Motor neuron (in vitro differentiated cells): ENCODE measurements at regions of chr11 and their contacts with region 1.

Region 1: DNA sequence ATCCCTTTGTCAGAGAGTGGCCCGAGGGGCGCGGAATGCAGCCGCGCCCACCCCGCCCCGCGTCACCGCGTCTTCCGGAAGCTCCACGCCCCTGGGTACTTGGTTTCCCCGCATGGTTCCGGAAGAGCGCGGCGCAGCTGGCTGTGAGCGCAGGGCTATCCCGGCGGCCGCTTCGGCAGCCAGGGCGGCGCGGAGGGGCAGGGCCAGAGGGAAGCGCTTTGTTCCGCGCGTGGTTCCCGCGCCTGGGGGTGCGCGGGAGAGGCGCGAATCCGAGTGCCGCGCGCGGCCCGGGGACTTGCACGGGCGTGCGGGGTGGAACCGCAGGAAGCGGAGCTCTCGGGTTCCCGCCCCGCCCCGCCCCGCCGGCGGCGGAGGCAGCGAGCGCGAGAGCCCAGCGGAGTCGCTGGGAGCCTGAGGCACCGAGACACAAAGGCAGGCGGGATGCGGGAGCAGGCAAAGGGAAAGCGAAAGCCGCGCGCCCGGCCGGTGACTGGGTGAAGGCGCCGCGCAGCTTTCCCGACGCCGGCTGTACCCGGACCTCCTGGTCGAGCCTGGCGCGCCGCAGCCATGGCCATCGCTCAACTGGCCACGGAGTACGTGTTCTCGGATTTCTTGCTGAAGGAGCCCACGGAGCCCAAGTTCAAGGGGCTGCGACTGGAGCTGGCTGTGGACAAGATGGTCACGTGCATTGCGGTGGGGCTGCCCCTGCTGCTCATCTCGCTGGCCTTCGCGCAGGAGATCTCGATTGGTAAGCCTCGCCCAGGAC is at the start of gene PANX1:
- ATAC-seq: peak; percentile 72 to 89 (median 85)
- H3K4me3 ChIP-seq: peak within 1 kb of the TSS; percentile 60 to 89 (median 82)
- H3K27ac ChIP-seq: peak within 1 kb of the TSS; percentile 83 to 91
- H3K4me1 ChIP-seq: peaks cover 29 to 39% of the 10 kb centered on the region in 2 donors
- total RNA-seq, gene PANX1: 15.0 to 49.8 (median 28.3) TPM

Region 2: DNA sequence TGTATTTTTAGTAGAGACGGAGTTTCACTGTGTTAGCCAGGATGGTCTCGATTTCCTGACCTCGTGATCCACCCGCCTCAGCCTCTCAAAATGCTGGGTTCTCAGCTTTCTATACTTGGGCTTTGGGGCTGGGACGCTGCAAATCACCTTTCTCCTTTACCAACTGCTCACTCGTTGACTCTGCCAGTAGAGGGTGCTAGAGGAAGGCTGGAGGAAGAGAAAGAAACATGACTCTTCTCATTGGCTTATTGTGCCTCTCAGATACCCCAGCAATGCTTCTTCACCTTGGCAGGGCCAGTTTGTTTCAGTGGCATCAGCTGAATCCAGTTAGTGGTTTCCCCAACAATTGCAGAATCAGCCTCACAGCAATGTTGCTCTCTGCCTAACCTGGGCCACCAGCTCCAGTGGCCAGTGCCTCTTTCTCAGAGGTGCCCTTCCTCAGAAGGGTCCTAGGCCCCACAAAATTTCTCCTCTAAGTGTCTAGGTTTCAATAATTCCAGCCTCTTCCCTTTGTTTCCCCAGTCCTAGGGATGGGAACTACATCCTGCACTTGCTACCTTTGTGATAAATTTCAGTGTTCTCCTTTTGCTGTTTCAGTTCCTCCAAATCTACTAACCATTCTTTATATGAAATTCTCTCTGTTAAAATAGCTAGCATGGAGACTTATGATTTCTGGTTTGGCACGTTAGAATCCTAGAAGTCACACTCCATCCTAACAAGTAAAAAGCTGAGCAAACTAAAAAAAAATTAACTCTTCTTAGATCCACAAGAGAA is 207.0 kb before region 1 on chr11:
- in situ Hi-C with region 1: loop called in 1 of 9 experiments (anchors 25 kb)
- ATAC-seq: peak in 4 of 8 experiments; percentile 47 to 94 (median 90)
- H3K4me3 ChIP-seq: no peak overlapping the region
- H3K27ac ChIP-seq: no peak overlapping the region
- H3K4me1 ChIP-seq: no peaks in the 10 kb centered on the region

Region 3: DNA sequence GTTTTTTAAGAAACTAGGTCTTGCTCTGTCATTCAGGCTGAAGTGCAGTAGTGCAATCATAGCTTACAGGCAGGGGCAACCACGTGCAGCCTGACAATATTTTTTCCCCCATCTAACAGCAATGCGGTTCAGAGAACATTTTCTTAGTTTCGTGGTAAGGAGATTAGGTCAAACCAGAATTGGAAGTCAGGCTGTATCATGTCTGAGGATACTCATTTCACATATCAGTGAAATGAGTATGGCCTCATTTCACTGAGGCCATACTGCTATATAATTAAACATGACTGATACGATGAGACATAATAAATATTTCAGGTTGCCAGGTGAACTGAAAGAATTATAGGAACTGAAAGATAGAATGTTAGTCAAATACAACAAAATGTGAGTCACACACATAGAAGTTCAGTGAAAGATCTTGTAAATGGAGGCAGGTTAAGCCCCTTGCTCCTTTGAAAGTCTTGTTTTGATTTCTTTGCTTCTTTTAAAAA is 143.0 kb after region 1 on chr11:
- in situ Hi-C with region 1: no loop called
- ATAC-seq: no peak
- H3K4me3 ChIP-seq: no peak overlapping the region
- H3K27ac ChIP-seq: no peak overlapping the region
- H3K4me1 ChIP-seq: no peaks in the 10 kb centered on the region

Region 4: GRCh38 chr11:95035316-95035715 is 906.4 kb after region 1 on chr11:
- in situ Hi-C with region 1: no loop called
- ATAC-seq: no peak
- H3K4me3 ChIP-seq: no peak overlapping the region
- H3K27ac ChIP-seq: no peak overlapping the region
- H3K4me1 ChIP-seq: no peaks in the 10 kb centered on the region